ENCODE measurements at regions of chr3 and their contacts with region 1.

Region 1: DNA sequence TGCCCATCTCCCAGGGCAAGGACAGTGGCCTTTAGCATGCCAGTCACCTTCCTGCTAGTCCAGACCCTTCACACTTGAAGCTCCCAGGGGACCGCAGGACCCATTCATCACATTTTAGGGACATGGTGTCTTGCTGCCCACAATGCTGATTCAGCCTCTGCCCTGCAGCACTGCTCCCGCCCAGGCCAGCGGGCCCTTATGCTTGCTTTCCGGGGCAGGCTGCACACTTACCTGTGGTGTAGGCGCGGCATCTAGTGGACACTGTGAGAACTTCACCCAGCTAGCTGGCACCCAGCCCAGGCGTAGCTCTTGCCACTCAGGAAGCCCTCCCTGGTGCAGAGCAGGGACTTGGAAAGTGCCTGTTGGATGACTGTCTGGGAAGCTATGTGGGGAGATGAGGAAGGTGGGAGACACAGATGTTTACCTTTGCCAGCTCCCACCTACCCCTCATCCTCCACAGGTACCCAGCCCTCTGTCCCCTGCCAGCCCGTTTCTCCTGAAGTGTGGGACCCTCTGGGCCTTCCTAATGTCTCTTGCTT is 26.2 kb upstream of the NR2C2 start:
- DNase-seq: peak; percentile 89 to 91
- H3K4me3 ChIP-seq: no peak overlapping the region
- H3K27ac ChIP-seq: no peak overlapping the region
- H3K4me1 ChIP-seq: no peaks in the 10 kb centered on the region
- H3K27me3 ChIP-seq: no peaks in the 10 kb centered on the region
- CTCF ChIP-seq: peak; percentile 97 to 99

Region 2: GRCh38 chr3:14640157-14640562 is 281.0 kb before region 1 on chr3:
- intact Hi-C with region 1: no loop called
- DNase-seq: no peak
- H3K4me3 ChIP-seq: no peak overlapping the region
- H3K27ac ChIP-seq: no peak overlapping the region
- H3K4me1 ChIP-seq: no peaks in the 10 kb centered on the region
- H3K27me3 ChIP-seq: peaks cover 0 to 64% of the 10 kb centered on the region in 2 donors
- CTCF ChIP-seq: no peak

Region 3: DNA sequence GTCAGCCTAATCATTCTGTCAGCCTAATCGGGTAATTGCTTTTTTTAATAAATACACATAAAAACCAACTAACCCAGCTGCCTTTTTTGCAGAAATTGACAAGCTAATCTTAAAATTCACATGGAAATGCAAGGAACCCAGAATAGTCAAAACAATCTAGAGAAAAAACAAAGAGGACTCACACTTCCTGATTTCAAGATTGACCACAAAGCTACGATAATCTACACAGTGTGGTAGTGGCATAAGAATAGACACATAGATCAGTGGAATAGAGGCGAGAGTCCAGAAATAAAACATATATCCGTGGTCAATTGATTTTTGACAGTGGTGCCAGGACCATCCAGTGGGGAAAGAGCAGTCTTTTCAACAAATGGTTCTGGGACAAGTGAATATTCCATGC is 248.6 kb before region 1 on chr3:
- intact Hi-C with region 1: loop called (anchors 5 kb)
- DNase-seq: no peak
- H3K4me3 ChIP-seq: no peak overlapping the region
- H3K27ac ChIP-seq: no peak overlapping the region
- H3K4me1 ChIP-seq: no peaks in the 10 kb centered on the region
- H3K27me3 ChIP-seq: no peaks in the 10 kb centered on the region
- CTCF ChIP-seq: no peak

Region 4: GRCh38 chr3:14791343-14791945 is 129.7 kb before region 1 on chr3:
- intact Hi-C with region 1: loop called (anchors 5 kb)
- DNase-seq: peak; percentile 74 to 75
- H3K4me3 ChIP-seq: no peak overlapping the region
- H3K27ac ChIP-seq: no peak overlapping the region
- H3K4me1 ChIP-seq: peaks cover 0 to 10% (median 4%) of the 10 kb centered on the region in 4 donors
- H3K27me3 ChIP-seq: peaks cover 0 to 3% of the 10 kb centered on the region in 2 donors
- CTCF ChIP-seq: peak; percentile 41 to 45

Region 5: DNA sequence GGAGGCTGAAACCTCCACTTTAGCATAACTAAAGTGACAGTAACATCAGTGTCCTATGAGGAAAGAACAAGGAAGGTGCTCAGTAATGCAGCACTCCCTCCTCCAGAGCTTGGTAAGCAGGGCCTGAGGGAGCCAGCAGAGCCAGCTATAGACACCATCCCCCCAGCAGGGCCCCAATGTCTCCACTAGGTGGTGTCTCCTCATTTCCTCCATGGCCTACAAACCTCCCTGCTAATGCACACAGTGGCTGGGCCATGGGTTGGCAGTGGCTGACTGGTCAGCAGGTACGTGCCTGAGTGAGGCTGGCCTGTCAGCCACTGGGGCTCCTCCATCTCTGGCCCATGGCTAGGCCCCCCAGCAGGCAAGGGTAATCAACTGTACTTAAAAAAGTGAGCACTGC is 130.4 kb after region 1 on chr3:
- intact Hi-C with region 1: loop called (anchors 10 kb)
- DNase-seq: no peak
- H3K4me3 ChIP-seq: no peak overlapping the region
- H3K27ac ChIP-seq: no peak overlapping the region
- H3K4me1 ChIP-seq: no peaks in the 10 kb centered on the region
- H3K27me3 ChIP-seq: no peaks in the 10 kb centered on the region
- CTCF ChIP-seq: peak in 1 of 2 experiments; percentile 26